ENCODE measurements at regions of chr2 and their contacts with region 1.

Region 1: DNA sequence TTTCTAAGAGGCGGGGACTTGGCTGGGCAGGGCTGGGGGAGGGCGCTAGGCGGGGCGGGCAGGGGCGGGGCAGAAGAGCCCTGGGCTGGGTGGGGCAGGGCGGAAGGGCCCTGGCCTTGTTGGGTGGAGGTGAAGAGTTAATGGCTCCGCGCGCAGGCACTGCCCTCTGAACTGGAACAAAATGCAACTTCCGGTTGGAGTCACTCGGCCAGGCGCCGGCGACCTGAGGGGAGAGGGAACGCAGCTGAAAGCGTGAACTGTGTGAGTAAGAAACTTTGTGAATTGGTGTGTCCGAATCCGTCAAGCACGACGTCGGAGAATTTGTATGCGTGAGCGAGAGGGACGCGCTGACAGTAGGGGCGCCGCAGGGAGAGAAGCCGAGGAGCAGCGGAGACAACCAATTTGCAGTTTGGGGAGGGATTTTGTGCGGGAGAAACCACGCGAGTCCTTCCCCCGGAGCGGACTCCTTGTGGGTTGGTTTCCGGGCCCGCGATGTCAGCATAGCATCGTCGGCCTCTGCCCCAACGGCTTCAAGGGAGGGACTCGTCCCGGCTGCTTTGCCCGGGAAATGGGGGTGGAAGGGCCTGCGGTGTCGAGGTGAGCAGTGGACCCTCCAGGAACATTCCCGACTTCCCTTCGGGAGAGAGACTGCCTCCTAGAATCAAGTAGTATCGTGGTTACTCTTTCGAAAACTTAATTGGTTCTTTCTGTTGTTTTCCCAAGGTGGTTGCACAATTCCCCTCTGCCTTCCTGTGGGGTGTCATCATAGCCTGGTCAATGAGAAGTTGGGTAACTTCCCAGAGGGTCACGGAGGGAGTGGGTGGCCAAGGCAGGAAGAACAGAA is at the start of gene TANK:
- DNase-seq: peak; percentile 96
- ATAC-seq: peak; percentile 95
- H3K4me3 ChIP-seq: peak within 1 kb of the TSS; percentile 90 to 99 (median 96)
- H3K4me3 Mint-ChIP-seq: peak within 1 kb of the TSS; percentile 95
- H3K27ac ChIP-seq: peak within 1 kb of the TSS; percentile 93 to 97
- H3K27ac Mint-ChIP-seq: peak within 1 kb of the TSS; percentile 96
- H3K4me1 ChIP-seq: peaks cover 37 to 45% of the 10 kb centered on the region in 2 donors
- H3K4me1 Mint-ChIP-seq: peaks cover 77% of the 10 kb centered on the region
- H3K27me3 ChIP-seq: no peaks in the 10 kb centered on the region
- H3K27me3 Mint-ChIP-seq: no peaks in the 10 kb centered on the region
- CTCF ChIP-seq: no peak
- total RNA-seq, gene TANK: 179 and 191 TPM in 2 replicates

Region 2: GRCh38 chr2:161090411-161090810 is 70.0 kb before region 1 on chr2:
- CTCF ChIA-PET with region 1: no interaction called
- POLR2A ChIA-PET with region 1: no interaction called
- intact Hi-C with region 1: loop called (anchors 5 kb)
- DNase-seq: peak; percentile 58
- ATAC-seq: peak; percentile 56
- H3K4me3 ChIP-seq: peak overlapping the region; percentile 11 to 58 (median 23)
- H3K4me3 Mint-ChIP-seq: peak overlapping the region; percentile 60
- H3K27ac ChIP-seq: peak overlapping the region in 1 of 2 donors; percentile 43
- H3K27ac Mint-ChIP-seq: peak overlapping the region; percentile 84
- H3K4me1 ChIP-seq: peaks cover 30 to 33% of the 10 kb centered on the region in 2 donors
- H3K4me1 Mint-ChIP-seq: peaks cover 45% of the 10 kb centered on the region
- H3K27me3 ChIP-seq: no peaks in the 10 kb centered on the region
- H3K27me3 Mint-ChIP-seq: no peaks in the 10 kb centered on the region
- CTCF ChIP-seq: no peak

Region 3: GRCh38 chr2:161104054-161104553 is 56.3 kb before region 1 on chr2:
- CTCF ChIA-PET with region 1: no interaction called
- POLR2A ChIA-PET with region 1: no interaction called
- intact Hi-C with region 1: no loop called
- DNase-seq: peak; percentile 14
- ATAC-seq: peak; percentile 33
- H3K4me3 ChIP-seq: peak overlapping the region in 1 of 5 experiments; percentile 43
- H3K4me3 Mint-ChIP-seq: peak overlapping the region; percentile 83
- H3K27ac ChIP-seq: no peak overlapping the region
- H3K27ac Mint-ChIP-seq: peak overlapping the region; percentile 72
- H3K4me1 ChIP-seq: peaks cover 0 to 6% of the 10 kb centered on the region in 2 donors
- H3K4me1 Mint-ChIP-seq: peaks cover 19% of the 10 kb centered on the region
- H3K27me3 ChIP-seq: peaks cover 0 to 4% (median 0%) of the 10 kb centered on the region in 4 experiments
- H3K27me3 Mint-ChIP-seq: no peaks in the 10 kb centered on the region
- CTCF ChIP-seq: no peak

Region 4: GRCh38 chr2:161172901-161173540 is 12.6 kb after region 1 on chr2:
- CTCF ChIA-PET with region 1: no interaction called
- POLR2A ChIA-PET with region 1: interaction called, 3 read pairs
- intact Hi-C with region 1: loop called (anchors 1 kb)
- DNase-seq: no peak
- ATAC-seq: no peak
- H3K4me3 ChIP-seq: no peak overlapping the region
- H3K4me3 Mint-ChIP-seq: peak overlapping the region; percentile 21
- H3K27ac ChIP-seq: no peak overlapping the region
- H3K27ac Mint-ChIP-seq: peak overlapping the region; percentile 15
- H3K4me1 ChIP-seq: peaks cover 69 to 70% of the 10 kb centered on the region in 2 donors
- H3K4me1 Mint-ChIP-seq: peaks cover 86% of the 10 kb centered on the region
- H3K27me3 ChIP-seq: no peaks in the 10 kb centered on the region
- H3K27me3 Mint-ChIP-seq: no peaks in the 10 kb centered on the region
- CTCF ChIP-seq: no peak

Region 5: GRCh38 chr2:161238560-161239325 is 78.3 kb after region 1 on chr2:
- CTCF ChIA-PET with region 1: no interaction called
- POLR2A ChIA-PET with region 1: no interaction called
- intact Hi-C with region 1: loop called (anchors 5 kb)
- DNase-seq: peak; percentile 66
- ATAC-seq: peak; percentile 54
- H3K4me3 ChIP-seq: peak overlapping the region; percentile 43 to 75 (median 57)
- H3K4me3 Mint-ChIP-seq: peak overlapping the region; percentile 90
- H3K27ac ChIP-seq: no peak overlapping the region
- H3K27ac Mint-ChIP-seq: peak overlapping the region; percentile 60
- H3K4me1 ChIP-seq: peaks cover 17% of the 10 kb centered on the region in 2 donors
- H3K4me1 Mint-ChIP-seq: peaks cover 51% of the 10 kb centered on the region
- H3K27me3 ChIP-seq: peaks cover 0 to 6% (median 0%) of the 10 kb centered on the region in 4 experiments
- H3K27me3 Mint-ChIP-seq: no peaks in the 10 kb centered on the region
- CTCF ChIP-seq: no peak

Region 6: DNA sequence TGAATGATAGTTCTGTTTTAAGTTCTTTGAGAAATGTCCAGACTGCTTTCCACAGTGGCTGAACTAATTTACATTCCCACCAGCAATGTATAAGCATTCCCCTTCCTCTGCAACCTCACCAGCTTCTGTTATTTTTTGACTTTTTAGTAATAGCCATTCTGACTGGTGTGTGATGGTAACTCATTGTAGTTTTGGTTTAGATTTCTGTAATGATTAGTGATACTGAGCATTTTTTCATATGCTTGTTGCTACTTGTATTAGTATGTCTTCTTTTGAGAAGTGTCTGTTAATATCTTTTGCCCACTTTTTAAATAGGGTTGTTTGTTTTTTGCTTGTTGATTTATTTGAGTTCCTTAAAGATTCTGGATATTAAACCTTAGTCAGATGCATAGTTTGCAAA is 687.5 kb after region 1 on chr2:
- CTCF ChIA-PET with region 1: no interaction called
- POLR2A ChIA-PET with region 1: no interaction called
- intact Hi-C with region 1: no loop called
- DNase-seq: no peak
- ATAC-seq: no peak
- H3K4me3 ChIP-seq: no peak overlapping the region
- H3K4me3 Mint-ChIP-seq: no peak overlapping the region
- H3K27ac ChIP-seq: no peak overlapping the region
- H3K27ac Mint-ChIP-seq: no peak overlapping the region
- H3K4me1 ChIP-seq: no peaks in the 10 kb centered on the region
- H3K4me1 Mint-ChIP-seq: no peaks in the 10 kb centered on the region
- H3K27me3 ChIP-seq: no peaks in the 10 kb centered on the region
- H3K27me3 Mint-ChIP-seq: no peaks in the 10 kb centered on the region
- CTCF ChIP-seq: no peak

Region 7: DNA sequence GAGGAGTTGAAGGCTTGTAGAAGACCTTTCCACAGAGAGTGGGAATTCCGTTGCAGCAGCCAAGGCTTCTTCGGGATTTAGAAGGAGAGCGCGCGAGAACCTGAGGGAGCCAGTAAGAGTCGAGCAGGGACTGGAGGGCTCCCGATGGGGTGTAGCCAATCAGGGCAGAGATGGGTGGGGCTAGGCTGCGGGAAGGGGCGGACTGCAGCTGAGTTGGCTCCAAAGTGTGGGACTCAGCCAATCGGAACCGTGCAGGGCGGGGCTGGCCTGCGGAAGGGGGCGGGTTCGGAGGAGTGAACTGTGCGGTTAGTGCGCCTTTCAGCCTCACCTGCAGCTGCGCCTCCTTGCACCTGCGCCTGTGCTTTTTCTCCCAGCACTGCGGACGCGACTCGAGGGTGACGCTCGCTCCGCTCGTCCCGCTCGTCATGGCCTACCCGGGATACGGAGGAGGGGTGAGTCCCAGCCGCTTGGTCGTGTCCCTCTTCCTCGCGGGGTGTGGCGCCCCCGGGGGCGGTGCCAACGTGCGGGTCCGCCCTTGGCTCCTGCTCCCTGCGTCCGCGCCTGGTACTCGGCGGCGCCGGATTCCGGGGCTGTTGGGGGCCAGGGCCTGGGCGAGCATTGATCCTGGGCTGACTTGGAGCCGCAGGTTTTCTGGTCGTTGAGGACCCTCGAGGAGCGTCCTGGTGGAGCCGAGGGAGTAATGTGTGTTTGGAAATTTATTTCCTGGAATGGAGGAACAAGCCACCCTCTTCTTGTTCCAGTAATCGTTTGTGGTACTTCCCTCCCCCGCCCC is 1183.6 kb after region 1 on chr2 and contains the start of gene GCA:
- CTCF ChIA-PET with region 1: no interaction called
- POLR2A ChIA-PET with region 1: no interaction called
- intact Hi-C with region 1: loop called (anchors 10 kb)
- DNase-seq: peak; percentile 98
- ATAC-seq: peak; percentile 98
- H3K4me3 ChIP-seq: peak within 1 kb of the TSS; percentile 62 to 93 (median 89)
- H3K4me3 Mint-ChIP-seq: peak within 1 kb of the TSS; percentile 91
- H3K27ac ChIP-seq: peak within 1 kb of the TSS; percentile 80 to 86
- H3K27ac Mint-ChIP-seq: peak within 1 kb of the TSS; percentile 90
- H3K4me1 ChIP-seq: peaks cover 11 to 16% of the 10 kb centered on the region in 2 donors
- H3K4me1 Mint-ChIP-seq: peaks cover 19% of the 10 kb centered on the region
- H3K27me3 ChIP-seq: no peaks in the 10 kb centered on the region
- H3K27me3 Mint-ChIP-seq: no peaks in the 10 kb centered on the region
- CTCF ChIP-seq: no peak
- total RNA-seq, gene GCA: 31.6 and 33.0 TPM in 2 replicates